Ovary (tissue), 10 donors: ENCODE measurements at regions of chr20 and their contacts with region 1.

Region 1: DNA sequence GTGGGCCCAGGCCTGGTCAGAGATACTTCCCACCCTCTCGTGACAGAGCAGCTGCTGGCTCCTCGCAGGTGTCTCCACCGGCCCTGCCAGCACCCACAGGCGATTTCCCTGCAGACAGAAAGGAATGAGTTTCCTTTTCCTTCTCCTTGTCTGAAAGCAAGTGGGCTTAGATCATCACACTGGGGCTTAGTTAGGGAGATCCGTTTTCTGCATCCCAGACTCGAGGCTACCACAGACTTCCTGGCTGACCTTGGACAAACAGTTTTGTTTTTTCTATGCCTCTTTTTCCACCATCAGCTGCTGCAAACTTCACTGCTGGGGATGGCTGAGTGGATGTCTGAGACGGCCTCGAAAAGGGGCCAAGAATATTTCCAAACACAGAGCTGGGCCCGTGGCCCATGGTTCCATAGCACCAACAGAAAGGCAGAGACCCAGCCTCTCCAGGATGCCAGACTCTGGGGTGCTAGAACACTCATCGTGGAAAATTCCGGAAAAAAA is 86.5 kb downstream of the BANF2 start:
- DNase-seq: peak; percentile 51 to 69 (median 64)
- H3K4me3 ChIP-seq: no peak overlapping the region
- H3K27ac ChIP-seq: peak overlapping the region in 1 of 2 donors; percentile 83
- H3K4me1 ChIP-seq: peaks cover 2% of the 10 kb centered on the region
- H3K27me3 ChIP-seq: no peaks in the 10 kb centered on the region
- CTCF ChIP-seq: no peak
- EP300 ChIP-seq: no peak
- POLR2A ChIP-seq: no peak

Region 2: DNA sequence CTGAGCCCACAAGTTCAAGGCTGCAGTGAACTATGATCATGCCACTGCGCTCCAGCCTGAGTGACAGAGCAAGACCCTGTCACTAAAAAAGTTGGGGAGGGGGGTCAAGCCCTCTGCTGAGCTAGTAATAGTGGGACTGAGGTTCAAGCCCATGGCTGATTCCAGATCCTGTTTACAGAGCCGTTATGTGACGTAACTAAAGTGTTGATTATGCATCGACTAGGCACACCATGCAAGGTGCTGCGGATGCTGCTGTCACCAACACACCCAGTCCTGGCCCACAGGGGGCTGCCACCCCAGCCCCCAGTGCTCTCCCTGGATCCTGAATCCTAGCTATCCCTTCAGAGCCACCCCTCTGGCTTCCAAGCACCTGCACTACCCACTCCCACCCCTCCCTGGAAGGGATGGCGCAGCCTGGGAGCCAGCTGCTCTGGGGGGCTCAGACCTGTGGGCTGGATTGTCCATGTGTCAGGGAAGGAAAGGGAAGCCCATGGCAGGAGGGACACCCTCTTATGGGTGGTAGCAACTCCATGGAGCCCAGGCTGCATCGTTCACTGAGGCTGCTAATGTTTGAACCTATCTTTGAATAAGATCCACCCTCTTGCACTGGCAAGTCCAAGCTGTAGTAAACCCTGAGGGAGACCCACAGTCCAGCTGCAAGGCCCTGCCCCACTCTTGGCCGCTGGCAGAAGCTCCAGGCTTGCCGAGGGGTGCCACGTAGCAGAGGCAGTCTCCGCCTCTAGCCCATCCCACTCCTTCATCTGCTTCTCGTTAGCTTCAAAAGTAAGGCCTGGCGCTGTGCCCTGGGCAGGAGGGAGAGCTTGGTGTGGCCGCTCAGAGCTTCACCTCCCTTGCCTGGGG is 87.4 kb after region 1 on chr20:
- intact Hi-C with region 1: loop called in 1 of 4 experiments (anchors 10 kb)
- DNase-seq: peak; percentile 90 to 96 (median 95)
- H3K4me3 ChIP-seq: no peak overlapping the region
- H3K27ac ChIP-seq: peak overlapping the region in 1 of 2 donors; percentile 65
- H3K4me1 ChIP-seq: peaks cover 17% of the 10 kb centered on the region
- H3K27me3 ChIP-seq: no peaks in the 10 kb centered on the region
- CTCF ChIP-seq: no peak
- EP300 ChIP-seq: no peak
- POLR2A ChIP-seq: no peak